Activated CD4-positive, alpha-beta T cell treated with anti-CD3 and anti-CD28 coated beads, Interleukin-2, amount 10 ng/mL, durations not matched to agents 24 days and 14 days (primary cell): ENCODE measurements at regions of chr3 and their contacts with region 1.

Region 1: GRCh38 chr3:134197681-134198261 is 52.9 kb downstream of the RYK start:
- DNase-seq: peak; percentile 77
- H3K4me3 Mint-ChIP-seq: no peak overlapping the region
- H3K27ac Mint-ChIP-seq: no peak overlapping the region
- H3K4me1 Mint-ChIP-seq: no peaks in the 10 kb centered on the region
- H3K27me3 Mint-ChIP-seq: no peaks in the 10 kb centered on the region

Region 2: DNA sequence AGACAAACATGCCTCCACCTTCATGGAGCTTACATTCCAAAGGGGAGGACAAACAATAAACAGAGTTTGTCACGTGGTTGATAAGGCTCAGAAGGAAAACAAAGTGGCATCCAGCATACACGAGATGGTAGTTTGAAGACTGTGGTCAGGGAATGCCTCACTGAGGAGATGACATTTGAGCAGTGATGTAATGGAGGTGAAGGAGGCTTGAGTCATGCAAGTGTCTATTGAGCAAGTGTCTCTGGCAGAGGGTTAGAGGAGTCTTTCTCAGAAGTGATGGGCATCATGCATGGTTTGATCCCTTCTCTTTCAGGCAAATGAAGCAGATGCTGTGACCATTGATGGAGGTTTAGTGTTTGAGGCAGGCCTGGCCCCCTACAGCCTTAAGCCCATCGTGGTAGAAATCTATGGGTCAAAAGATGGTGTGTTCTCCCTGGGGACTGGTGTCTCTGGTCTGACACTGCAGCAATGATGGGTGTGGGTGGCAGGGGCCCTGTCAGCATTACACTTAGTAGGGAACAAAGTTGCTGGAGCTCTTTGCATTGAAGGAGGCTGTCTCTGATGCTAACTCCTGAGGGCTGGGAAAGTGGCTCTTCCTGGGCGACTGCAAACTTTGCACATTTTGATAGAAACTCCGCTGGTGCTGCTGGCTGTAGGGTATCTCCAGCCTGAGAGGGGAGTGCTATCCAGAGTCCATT is 506.2 kb before region 1 on chr3:
- intact Hi-C with region 1: no loop called
- DNase-seq: no peak
- H3K4me3 Mint-ChIP-seq: no peak overlapping the region
- H3K27ac Mint-ChIP-seq: no peak overlapping the region
- H3K4me1 Mint-ChIP-seq: no peaks in the 10 kb centered on the region
- H3K27me3 Mint-ChIP-seq: peaks cover 3% of the 10 kb centered on the region

Region 3: GRCh38 chr3:133927540-133928066 is 270.2 kb before region 1 on chr3:
- intact Hi-C with region 1: loop called (anchors 10 kb)
- DNase-seq: peak; percentile 92
- H3K4me3 Mint-ChIP-seq: peak overlapping the region; percentile 64
- H3K27ac Mint-ChIP-seq: no peak overlapping the region
- H3K4me1 Mint-ChIP-seq: peaks cover 5% of the 10 kb centered on the region
- H3K27me3 Mint-ChIP-seq: peaks cover 33% of the 10 kb centered on the region

Region 4: GRCh38 chr3:134239538-134239937 is 41.8 kb after region 1 on chr3:
- intact Hi-C with region 1: no loop called
- DNase-seq: no peak
- H3K4me3 Mint-ChIP-seq: peak overlapping the region; percentile 51
- H3K27ac Mint-ChIP-seq: peak overlapping the region; percentile 62
- H3K4me1 Mint-ChIP-seq: peaks cover 37% of the 10 kb centered on the region
- H3K27me3 Mint-ChIP-seq: peaks cover 19% of the 10 kb centered on the region

Region 5: DNA sequence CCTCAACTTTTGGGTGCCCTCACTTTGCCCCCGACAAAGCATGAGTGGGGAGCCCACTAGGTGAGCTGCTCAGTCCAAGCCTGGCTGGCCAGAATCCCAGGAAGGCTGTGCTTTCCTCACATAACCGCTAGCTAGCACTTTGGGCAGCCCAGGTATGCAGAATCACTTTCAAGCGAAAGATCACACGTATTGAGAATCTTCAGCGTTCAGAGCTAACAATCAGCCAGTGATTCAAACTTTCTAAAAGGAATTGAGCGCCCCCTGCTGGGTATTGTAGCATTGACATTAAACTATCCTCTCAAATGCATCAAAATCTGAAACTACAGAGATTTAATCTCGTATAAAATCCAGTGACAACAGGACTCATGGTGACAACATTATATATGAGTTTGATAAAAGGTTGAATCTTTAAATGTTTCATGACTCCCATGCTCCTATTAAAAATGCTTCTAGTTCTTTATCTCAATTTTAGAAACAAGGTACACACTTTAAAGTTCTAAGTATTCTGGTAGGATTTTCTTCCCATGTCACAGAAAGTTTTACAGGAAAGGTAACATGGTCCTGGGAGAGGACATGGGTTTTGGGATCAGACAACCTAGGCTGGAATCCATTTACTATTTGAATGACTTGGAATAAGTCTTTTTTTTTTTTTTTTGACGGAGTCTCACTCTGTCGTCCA is 276.2 kb after region 1 on chr3:
- intact Hi-C with region 1: loop called (anchors 1 kb)
- DNase-seq: peak; percentile 93
- H3K4me3 Mint-ChIP-seq: no peak overlapping the region
- H3K27ac Mint-ChIP-seq: no peak overlapping the region
- H3K4me1 Mint-ChIP-seq: no peaks in the 10 kb centered on the region
- H3K27me3 Mint-ChIP-seq: no peaks in the 10 kb centered on the region